AG04450 (cell line): ENCODE measurements at regions of chr15 and their contacts with region 1.

Region 1: GRCh38 chr15:57861036-57861638 is 154.6 kb downstream of the POLR2M start:
- DNase-seq: peak; percentile 44
- H3K4me3 ChIP-seq: no peak overlapping the region
- H3K27ac ChIP-seq: no peak overlapping the region
- H3K27me3 ChIP-seq: no peaks in the 10 kb centered on the region
- CTCF ChIP-seq: peak; percentile 84

Region 2: GRCh38 chr15:57640935-57641682 is 220.0 kb before region 1 on chr15:
- CTCF ChIA-PET with region 1: interaction called, 38 read pairs
- POLR2A ChIA-PET with region 1: no interaction called
- DNase-seq: no peak
- H3K4me3 ChIP-seq: no peak overlapping the region
- H3K27ac ChIP-seq: no peak overlapping the region
- H3K27me3 ChIP-seq: peaks cover 11% of the 10 kb centered on the region
- CTCF ChIP-seq: peak; percentile 56

Region 3: GRCh38 chr15:57706405-57707209 is 154.5 kb before region 1 on chr15 and contains the start of gene POLR2M:
- CTCF ChIA-PET with region 1: interaction called, 15 read pairs
- POLR2A ChIA-PET with region 1: no interaction called
- DNase-seq: peak; percentile 98
- H3K4me3 ChIP-seq: peak within 1 kb of the TSS; percentile 97
- H3K27ac ChIP-seq: peak within 1 kb of the TSS; percentile 89
- H3K27me3 ChIP-seq: peaks cover 3% of the 10 kb centered on the region
- CTCF ChIP-seq: no peak
- polyA plus RNA-seq, gene POLR2M: 67.3 and 72.6 TPM in 2 replicates

Region 4: GRCh38 chr15:57743424-57743823 is 117.7 kb before region 1 on chr15:
- CTCF ChIA-PET with region 1: interaction called, 181 read pairs
- POLR2A ChIA-PET with region 1: no interaction called
- DNase-seq: no peak
- H3K4me3 ChIP-seq: no peak overlapping the region
- H3K27ac ChIP-seq: no peak overlapping the region
- H3K27me3 ChIP-seq: peaks cover 7% of the 10 kb centered on the region
- CTCF ChIP-seq: no peak

Region 5: DNA sequence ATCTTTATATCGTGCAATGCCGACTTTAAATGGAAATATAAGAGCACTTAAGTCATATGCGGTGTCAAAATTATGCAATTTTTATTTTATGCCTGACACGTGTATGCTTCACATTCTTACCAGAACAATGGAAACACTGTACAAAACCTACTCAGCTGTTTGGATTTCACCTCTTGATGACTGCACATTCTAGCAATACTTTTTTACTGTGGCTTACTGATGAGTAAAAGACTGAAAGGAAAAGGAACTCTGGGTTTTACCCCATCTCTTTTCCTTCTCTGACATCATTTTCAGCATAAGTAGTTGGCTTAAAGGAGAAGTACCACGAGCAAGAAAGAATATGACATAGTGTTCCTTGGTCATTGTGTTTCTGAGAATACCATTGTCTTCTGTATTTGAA is 11.8 kb before region 1 on chr15:
- CTCF ChIA-PET with region 1: interaction called, 27 read pairs
- POLR2A ChIA-PET with region 1: no interaction called
- DNase-seq: no peak
- H3K4me3 ChIP-seq: no peak overlapping the region
- H3K27ac ChIP-seq: no peak overlapping the region
- H3K27me3 ChIP-seq: no peaks in the 10 kb centered on the region
- CTCF ChIP-seq: no peak

Region 6: DNA sequence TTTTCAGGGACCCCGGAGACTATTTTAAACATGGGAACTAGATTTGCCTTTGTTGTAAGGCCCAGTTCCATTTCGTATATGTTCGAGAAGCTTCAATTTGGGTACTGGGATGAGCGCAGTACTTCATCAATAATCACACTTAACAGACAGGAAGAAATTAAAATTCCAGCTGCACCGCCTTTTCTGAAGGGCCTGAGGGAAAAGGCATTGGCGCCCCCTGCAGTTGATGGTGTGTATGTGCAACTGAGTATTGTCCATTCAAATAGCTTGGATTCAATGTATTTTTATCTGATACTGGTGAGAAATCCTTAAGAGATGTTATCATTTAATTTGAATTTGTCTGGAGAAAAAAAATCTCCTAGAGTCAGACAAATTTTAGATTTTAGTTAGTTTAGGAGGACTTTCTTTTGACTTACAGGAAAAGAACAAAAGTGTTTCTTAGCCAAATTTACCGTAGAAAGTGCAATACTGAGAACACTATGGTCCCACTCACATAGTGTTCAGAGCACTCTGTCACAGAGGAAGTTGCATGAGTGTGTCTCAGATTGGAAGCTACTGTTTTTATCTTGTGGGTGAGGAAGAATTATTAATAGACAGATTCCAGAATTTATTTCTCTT is 209.8 kb after region 1 on chr15:
- CTCF ChIA-PET with region 1: interaction called, 30 read pairs
- POLR2A ChIA-PET with region 1: no interaction called
- DNase-seq: no peak
- H3K4me3 ChIP-seq: no peak overlapping the region
- H3K27ac ChIP-seq: no peak overlapping the region
- H3K27me3 ChIP-seq: peaks cover 16% of the 10 kb centered on the region
- CTCF ChIP-seq: peak; percentile 86